Posterior cingulate gyrus (tissue), 11 donors: ENCODE measurements at regions of chr13 and their contacts with region 1.

Region 1: GRCh38 chr13:91381371-91381770 is 17.1 kb upstream of the GPC5 start:
- DNase-seq: peak in 2 of 10 donors; percentile 7 to 30

Region 2: GRCh38 chr13:91302111-91302510 is 79.3 kb before region 1 on chr13:
- intact Hi-C with region 1: no loop called
- DNase-seq: no peak

Region 3: DNA sequence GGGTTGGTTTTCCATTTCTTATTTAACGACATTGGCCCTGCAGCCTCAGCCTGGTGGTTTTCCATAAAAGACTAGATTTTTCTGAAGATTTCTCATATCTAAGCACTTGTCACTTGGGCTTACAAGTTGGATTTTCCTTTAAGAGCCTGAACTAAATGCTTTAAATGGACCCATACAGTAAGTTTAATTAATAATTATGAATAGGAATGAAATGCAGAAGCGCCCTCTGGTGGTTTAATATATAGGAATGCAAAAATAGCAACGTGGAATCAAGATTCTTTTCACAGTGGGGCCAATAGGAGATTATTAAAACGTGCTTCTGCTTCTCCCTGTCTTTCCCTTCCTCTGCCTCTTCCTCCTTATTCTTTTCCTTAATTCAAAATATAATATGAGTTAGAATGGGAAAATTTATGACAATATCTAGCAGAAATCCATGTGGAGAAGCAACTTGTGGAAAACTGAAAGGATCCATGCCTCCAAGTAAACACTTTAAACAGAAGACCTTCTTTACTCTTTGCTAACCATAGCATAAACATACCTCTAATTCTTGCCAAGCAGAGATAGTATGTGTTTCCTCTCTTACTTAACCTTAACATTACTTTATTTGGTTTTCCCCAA is 341.0 kb after region 1 on chr13:
- intact Hi-C with region 1: loop called (anchors 2 kb)
- DNase-seq: no peak